Dendritic cell treated with granulocyte-macrophage colony-stimulating factor and Interleukin-4, amounts not matched to agents 40 ng/mL and 50 ng/mL, for 4 days (primary cell): ENCODE measurements at regions of chr2 and their contacts with region 1.

Region 1: DNA sequence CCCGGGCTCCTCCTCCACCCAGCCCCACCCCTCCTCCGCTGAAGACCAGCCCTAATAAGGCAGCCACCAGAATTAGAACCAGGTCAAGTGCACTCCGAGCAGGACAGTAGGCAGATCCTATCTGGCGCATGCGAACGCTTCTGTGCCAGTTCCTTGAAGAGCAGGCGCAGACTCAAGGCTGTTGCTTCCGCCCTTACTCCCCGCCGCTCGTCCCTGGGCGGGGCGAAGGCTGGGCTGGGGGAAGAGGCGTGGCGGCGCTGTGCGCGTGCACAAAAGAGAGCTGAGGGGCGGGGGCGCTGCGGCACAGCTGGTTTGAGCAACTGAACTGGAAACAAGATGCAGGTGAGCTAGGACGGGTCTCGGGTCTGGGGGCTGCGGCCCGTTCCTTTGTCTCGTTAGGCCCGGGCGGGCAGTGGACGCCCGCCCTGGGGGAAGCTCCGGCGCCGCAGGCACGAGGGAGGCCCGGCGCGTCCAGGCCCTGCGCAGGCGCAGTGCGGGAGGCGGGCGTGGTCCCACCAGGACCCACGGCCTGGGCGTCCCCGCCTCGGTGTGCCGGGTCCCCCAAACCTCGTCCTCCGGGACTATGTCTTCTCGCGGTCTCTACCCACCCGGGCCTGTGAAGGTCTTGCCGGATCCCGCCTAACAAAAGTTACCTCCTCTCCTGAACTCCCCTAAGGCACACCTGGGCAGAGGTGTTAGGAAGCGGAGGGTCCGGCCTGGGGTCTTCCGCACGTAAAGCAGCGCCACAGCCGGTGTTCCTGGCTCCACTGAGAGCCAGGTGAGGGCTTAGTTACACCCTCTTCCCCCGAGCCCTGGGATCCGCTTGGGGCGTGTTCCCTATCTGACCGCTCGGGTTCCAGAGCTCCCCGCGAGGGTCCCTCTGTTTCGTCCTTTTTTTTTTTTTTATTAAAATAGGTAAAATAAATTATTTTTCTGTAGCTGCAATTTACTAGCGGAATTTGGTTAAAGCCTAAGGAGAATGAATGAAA is at the start of gene PDCL3:
- H3K4me3 Mint-ChIP-seq: peak within 1 kb of the TSS; percentile 86
- H3K27ac Mint-ChIP-seq: peak within 1 kb of the TSS; percentile 96
- H3K4me1 Mint-ChIP-seq: peaks cover 39% of the 10 kb centered on the region
- H3K27me3 Mint-ChIP-seq: no peaks in the 10 kb centered on the region

Region 2: DNA sequence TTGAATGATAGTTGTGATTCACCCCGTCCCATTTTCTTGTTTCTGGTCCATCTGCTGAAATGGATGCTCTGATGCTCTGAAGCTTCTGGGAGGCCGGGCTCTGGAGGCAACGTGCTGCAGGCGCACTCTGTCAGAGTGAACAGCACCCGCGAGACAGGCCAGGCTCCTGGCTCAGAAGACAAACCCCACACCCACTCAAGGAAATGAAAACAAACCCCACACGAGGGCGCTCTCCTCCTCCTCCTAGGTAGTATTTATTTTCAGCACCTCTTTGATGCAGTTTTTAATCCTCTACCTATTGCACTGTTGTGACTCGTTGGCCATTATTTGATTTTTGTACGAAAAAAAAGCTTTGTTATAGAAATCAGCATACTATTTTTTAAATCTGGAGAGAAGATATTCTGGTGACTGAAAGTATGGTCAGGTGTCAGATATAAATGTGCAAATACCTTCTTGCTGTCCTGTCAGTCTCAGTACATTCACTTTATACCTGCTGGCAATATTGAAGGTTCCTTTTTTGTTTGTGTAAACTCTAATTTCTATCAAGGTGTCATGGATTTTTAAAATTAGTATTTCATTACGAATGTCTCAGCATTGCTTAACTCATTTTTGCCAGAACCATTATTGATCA is 135.3 kb before region 1 on chr2:
- intact Hi-C with region 1: loop called (anchors 10 kb)
- H3K4me3 Mint-ChIP-seq: no peak overlapping the region
- H3K27ac Mint-ChIP-seq: no peak overlapping the region
- H3K4me1 Mint-ChIP-seq: peaks cover 32% of the 10 kb centered on the region
- H3K27me3 Mint-ChIP-seq: peaks cover 5% of the 10 kb centered on the region

Region 3: GRCh38 chr2:101001691-101002561 is 438.9 kb after region 1 on chr2 and contains the start of gene RPL31:
- intact Hi-C with region 1: loop called (anchors 2 kb)
- H3K4me3 Mint-ChIP-seq: peak within 1 kb of the TSS; percentile 97
- H3K27ac Mint-ChIP-seq: peak within 1 kb of the TSS; percentile 92
- H3K4me1 Mint-ChIP-seq: peaks cover 45% of the 10 kb centered on the region
- H3K27me3 Mint-ChIP-seq: peaks cover 5% of the 10 kb centered on the region

Region 4: GRCh38 chr2:101252408-101253012 is 689.5 kb after region 1 on chr2 and contains the start of gene CNOT11:
- intact Hi-C with region 1: loop called (anchors 5 kb)
- H3K4me3 Mint-ChIP-seq: peak within 1 kb of the TSS; percentile 90
- H3K27ac Mint-ChIP-seq: peak within 1 kb of the TSS; percentile 90
- H3K4me1 Mint-ChIP-seq: peaks cover 47% of the 10 kb centered on the region
- H3K27me3 Mint-ChIP-seq: no peaks in the 10 kb centered on the region